Endothelial cell of umbilical vein (primary cell): ENCODE measurements at regions of chr13 and their contacts with region 1.

Region 1: GRCh38 chr13:104318121-104318520 is 1251.9 kb upstream of the SLC10A2 start:
- DNase-seq: peak; percentile 43
- H3K4me3 ChIP-seq: no peak overlapping the region
- H3K27ac ChIP-seq: no peak overlapping the region
- H3K4me1 ChIP-seq: peaks cover 14% of the 10 kb centered on the region
- H3K27me3 ChIP-seq: no peaks in the 10 kb centered on the region
- CTCF ChIP-seq: peak; percentile 27 to 38
- POLR2A ChIP-seq: no peak

Region 2: GRCh38 chr13:103386341-103386740 is 931.8 kb before region 1 on chr13:
- CTCF ChIA-PET with region 1: no interaction called
- POLR2A ChIA-PET with region 1: no interaction called
- dilution Hi-C with region 1: no loop called
- intact Hi-C with region 1: no loop called
- DNase-seq: no peak
- H3K4me3 ChIP-seq: no peak overlapping the region
- H3K27ac ChIP-seq: no peak overlapping the region
- H3K4me1 ChIP-seq: no peaks in the 10 kb centered on the region
- H3K27me3 ChIP-seq: no peaks in the 10 kb centered on the region
- CTCF ChIP-seq: no peak
- POLR2A ChIP-seq: no peak

Region 3: DNA sequence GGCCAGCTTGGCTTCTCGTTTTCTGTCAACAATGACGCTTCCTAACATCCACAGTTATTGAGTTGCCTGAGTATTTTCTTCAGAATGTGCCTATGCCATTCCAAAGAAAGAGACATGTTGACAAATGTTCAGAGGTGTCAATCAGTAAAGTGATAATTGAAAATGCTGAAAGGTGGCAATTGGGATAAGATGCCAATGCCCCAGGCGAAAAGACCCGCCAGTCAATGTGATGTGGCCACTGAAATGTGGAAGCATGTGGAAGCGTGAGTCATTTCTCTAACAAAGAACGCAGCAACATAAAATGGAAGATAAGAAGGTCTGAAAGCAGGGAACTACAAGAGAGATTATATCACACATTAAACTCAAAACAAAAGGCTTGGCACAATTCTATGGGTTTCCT is 369.7 kb before region 1 on chr13:
- CTCF ChIA-PET with region 1: no interaction called
- POLR2A ChIA-PET with region 1: no interaction called
- dilution Hi-C with region 1: no loop called
- intact Hi-C with region 1: loop called (anchors 2 kb)
- DNase-seq: peak; percentile 92
- H3K4me3 ChIP-seq: no peak overlapping the region
- H3K27ac ChIP-seq: peak overlapping the region; percentile 84
- H3K4me1 ChIP-seq: peaks cover 48% of the 10 kb centered on the region
- H3K27me3 ChIP-seq: no peaks in the 10 kb centered on the region
- CTCF ChIP-seq: no peak
- POLR2A ChIP-seq: peak; percentile 38

Region 4: DNA sequence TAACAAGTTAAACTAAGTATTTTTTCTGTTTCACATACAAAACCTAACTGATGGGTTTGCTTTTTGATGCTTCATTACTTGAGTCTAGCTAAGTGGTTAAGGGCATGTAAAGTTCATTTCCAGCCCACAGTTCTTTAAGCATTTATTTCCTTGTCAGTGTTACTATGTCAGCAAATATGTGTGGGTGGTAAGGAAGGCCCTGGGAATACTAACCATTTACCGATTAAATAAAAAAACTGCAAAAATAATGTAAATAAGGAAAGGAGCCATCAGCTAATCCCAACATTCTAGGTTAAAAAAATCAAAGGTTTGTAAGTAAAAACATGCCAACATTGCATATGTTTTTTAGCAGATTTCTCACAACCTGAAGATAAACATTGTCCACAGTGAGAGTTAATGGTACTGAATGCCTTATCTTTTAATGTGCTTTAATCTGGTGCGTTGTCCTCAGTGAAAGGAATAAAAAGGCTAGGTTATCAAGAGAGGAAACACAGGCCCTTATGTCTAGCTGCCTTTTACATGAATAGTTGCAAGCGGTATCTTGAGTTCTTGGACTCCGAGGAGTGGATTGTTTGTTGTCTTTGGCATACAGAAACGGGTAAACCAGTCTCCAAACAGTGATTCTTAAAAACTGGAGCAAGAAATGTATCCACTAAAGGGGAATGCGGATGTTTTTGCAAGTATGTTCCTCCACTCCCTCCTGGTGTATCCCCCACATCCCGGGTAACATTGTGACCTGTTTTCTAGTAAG is 302.3 kb before region 1 on chr13:
- CTCF ChIA-PET with region 1: no interaction called
- POLR2A ChIA-PET with region 1: no interaction called
- dilution Hi-C with region 1: no loop called
- intact Hi-C with region 1: loop called (anchors 2 kb)
- DNase-seq: peak; percentile 89
- H3K4me3 ChIP-seq: no peak overlapping the region
- H3K27ac ChIP-seq: peak overlapping the region; percentile 74
- H3K4me1 ChIP-seq: peaks cover 23% of the 10 kb centered on the region
- H3K27me3 ChIP-seq: no peaks in the 10 kb centered on the region
- CTCF ChIP-seq: no peak
- POLR2A ChIP-seq: no peak

Region 5: GRCh38 chr13:104408733-104409132 is 90.6 kb after region 1 on chr13:
- CTCF ChIA-PET with region 1: no interaction called
- POLR2A ChIA-PET with region 1: no interaction called
- dilution Hi-C with region 1: no loop called
- intact Hi-C with region 1: loop called (anchors 1 kb)
- DNase-seq: peak; percentile 54
- H3K4me3 ChIP-seq: no peak overlapping the region
- H3K27ac ChIP-seq: peak overlapping the region; percentile 55
- H3K4me1 ChIP-seq: peaks cover 13% of the 10 kb centered on the region
- H3K27me3 ChIP-seq: no peaks in the 10 kb centered on the region
- CTCF ChIP-seq: no peak
- POLR2A ChIP-seq: no peak

Region 6: GRCh38 chr13:104422668-104423067 is 104.5 kb after region 1 on chr13:
- CTCF ChIA-PET with region 1: no interaction called
- POLR2A ChIA-PET with region 1: no interaction called
- dilution Hi-C with region 1: no loop called
- intact Hi-C with region 1: no loop called
- DNase-seq: no peak
- H3K4me3 ChIP-seq: no peak overlapping the region
- H3K27ac ChIP-seq: no peak overlapping the region
- H3K4me1 ChIP-seq: peaks cover 8% of the 10 kb centered on the region
- H3K27me3 ChIP-seq: no peaks in the 10 kb centered on the region
- CTCF ChIP-seq: no peak
- POLR2A ChIP-seq: no peak

Region 7: GRCh38 chr13:104553186-104553585 is 235.1 kb after region 1 on chr13:
- CTCF ChIA-PET with region 1: no interaction called
- POLR2A ChIA-PET with region 1: no interaction called
- dilution Hi-C with region 1: no loop called
- intact Hi-C with region 1: loop called (anchors 5 kb)
- DNase-seq: peak; percentile 76
- H3K4me3 ChIP-seq: no peak overlapping the region
- H3K27ac ChIP-seq: no peak overlapping the region
- H3K4me1 ChIP-seq: peaks cover 16% of the 10 kb centered on the region
- H3K27me3 ChIP-seq: no peaks in the 10 kb centered on the region
- CTCF ChIP-seq: no peak
- POLR2A ChIP-seq: no peak

Region 8: DNA sequence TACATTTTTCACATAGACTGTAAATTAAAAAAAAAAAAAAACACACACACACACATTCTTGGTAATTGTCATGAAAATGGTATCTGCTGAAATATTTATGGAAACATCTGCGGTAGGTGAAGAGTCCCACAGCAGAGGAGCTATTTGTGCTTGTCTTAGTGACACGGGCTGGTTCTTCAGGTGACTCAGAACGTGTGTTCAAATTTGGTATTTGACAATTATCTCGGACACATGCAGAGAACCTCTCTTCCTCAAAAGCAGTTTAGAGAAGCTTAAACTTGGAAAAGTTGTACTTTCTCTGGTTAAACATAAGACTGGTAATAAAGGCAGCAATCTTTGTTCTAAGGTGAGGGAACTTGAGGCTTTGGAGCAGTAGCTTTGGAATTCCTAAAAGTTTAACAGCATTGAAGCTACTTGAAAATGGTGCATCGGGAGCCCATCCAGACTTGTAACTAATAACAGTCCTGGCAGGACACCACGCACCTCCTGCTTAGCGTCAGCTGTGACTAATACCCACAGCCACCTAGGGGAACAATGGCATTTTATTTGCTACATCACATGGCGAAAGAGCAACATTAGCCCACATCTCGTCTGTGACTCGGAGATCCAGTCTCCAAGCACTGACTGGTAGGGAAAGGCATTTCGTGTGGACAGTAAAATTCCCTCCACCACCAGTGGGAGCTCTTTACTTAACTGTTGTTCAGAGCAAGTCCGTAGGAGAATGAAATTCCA is 253.2 kb after region 1 on chr13:
- CTCF ChIA-PET with region 1: interaction called, 5 read pairs
- POLR2A ChIA-PET with region 1: no interaction called
- dilution Hi-C with region 1: no loop called
- intact Hi-C with region 1: loop called (anchors 5 kb)
- DNase-seq: peak; percentile 89
- H3K4me3 ChIP-seq: no peak overlapping the region
- H3K27ac ChIP-seq: peak overlapping the region; percentile 4
- H3K4me1 ChIP-seq: no peaks in the 10 kb centered on the region
- H3K27me3 ChIP-seq: no peaks in the 10 kb centered on the region
- CTCF ChIP-seq: peak; percentile 73 to 76
- POLR2A ChIP-seq: no peak

Region 9: GRCh38 chr13:104984296-104984818 is 666.2 kb after region 1 on chr13:
- CTCF ChIA-PET with region 1: no interaction called
- POLR2A ChIA-PET with region 1: no interaction called
- dilution Hi-C with region 1: no loop called
- intact Hi-C with region 1: loop called (anchors 10 kb)
- DNase-seq: peak; percentile 92
- H3K4me3 ChIP-seq: peak overlapping the region in 1 of 3 experiments; percentile 25
- H3K27ac ChIP-seq: peak overlapping the region; percentile 78
- H3K4me1 ChIP-seq: peaks cover 26% of the 10 kb centered on the region
- H3K27me3 ChIP-seq: no peaks in the 10 kb centered on the region
- CTCF ChIP-seq: no peak
- POLR2A ChIP-seq: no peak